OCI-LY7 (cell line): ENCODE measurements at regions of chr20 and their contacts with region 1.

Region 1: DNA sequence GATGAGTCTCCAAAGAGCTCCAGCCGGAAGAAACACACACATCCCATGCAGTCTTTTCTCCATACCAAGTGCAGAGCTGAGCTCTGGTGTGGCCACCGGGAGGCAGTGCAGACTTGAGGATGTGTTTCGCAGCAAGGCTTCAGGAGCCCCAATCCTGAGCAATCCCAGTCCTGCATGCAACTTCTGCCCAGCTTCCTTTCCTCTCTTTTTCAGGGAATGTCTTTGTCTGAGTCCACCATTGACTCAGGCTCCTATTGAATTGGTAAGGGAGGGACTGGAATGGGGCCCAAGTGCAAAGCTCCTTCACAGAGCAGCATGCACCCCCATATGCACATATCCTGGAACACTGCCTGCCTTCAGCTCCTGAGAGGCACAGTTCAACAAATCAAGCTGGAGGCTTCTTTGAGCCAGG is 50.5 kb upstream of the ASIP start:
- DNase-seq: peak; percentile 76
- H3K4me3 ChIP-seq: no peak overlapping the region
- H3K27ac ChIP-seq: no peak overlapping the region
- H3K4me1 ChIP-seq: peaks cover 6% of the 10 kb centered on the region
- CTCF ChIP-seq: peak; percentile 98

Region 2: DNA sequence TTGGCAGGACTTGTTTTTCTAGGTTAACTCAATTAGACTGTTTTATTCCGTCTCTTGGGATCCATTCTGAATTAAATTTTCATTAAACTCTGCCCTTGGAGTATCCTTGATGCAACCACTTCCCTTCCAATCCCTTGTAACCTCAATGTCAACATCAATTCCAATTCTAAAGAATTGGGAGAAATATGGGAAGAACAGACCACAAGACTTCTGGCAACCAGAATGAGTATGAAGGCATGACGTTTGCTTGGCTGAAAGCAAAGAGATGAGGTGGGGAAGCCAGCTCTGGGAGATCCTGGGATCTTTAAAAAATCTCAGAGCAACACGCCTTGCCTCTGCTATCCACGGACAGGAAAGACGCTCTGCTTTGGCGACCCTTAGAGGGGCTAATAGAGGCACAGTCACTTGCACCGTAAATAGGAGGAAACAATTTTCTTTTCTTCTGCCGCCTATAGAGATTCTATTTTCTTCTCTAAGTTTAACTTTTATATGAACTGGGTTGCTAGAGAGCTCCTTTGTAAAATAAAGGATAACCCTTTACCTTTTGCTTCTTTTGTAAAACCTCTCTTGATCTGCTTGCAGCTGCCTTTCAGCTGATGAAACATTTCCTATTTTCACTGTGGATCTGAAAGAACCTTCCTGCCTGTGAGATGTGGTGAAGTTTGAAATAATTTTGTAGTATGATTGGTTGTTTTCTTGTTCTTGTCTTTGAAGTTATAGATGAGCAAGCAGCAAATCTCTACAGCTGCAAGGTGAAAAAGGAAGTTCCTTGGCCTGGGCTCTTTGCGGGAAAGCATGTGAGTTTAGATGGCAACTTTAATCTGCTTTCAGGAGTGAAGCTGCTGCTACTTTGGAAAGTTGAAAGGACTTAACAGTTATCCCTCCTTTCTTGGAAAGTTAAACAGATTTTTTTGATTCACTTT is 50.3 kb after region 1 on chr20 and contains the start of gene ASIP:
- CTCF ChIA-PET with region 1: no interaction called
- POLR2A ChIA-PET with region 1: no interaction called
- intact Hi-C with region 1: loop called (anchors 5 kb)
- DNase-seq: peak; percentile 86
- H3K4me3 ChIP-seq: peak within 1 kb of the TSS; percentile 56
- H3K27ac ChIP-seq: peak within 1 kb of the TSS; percentile 90
- H3K4me1 ChIP-seq: peaks cover 38% of the 10 kb centered on the region
- CTCF ChIP-seq: no peak
- total RNA-seq, gene ASIP: 0.32 TPM in 1 of 2 replicates, not detected in the other

Region 3: DNA sequence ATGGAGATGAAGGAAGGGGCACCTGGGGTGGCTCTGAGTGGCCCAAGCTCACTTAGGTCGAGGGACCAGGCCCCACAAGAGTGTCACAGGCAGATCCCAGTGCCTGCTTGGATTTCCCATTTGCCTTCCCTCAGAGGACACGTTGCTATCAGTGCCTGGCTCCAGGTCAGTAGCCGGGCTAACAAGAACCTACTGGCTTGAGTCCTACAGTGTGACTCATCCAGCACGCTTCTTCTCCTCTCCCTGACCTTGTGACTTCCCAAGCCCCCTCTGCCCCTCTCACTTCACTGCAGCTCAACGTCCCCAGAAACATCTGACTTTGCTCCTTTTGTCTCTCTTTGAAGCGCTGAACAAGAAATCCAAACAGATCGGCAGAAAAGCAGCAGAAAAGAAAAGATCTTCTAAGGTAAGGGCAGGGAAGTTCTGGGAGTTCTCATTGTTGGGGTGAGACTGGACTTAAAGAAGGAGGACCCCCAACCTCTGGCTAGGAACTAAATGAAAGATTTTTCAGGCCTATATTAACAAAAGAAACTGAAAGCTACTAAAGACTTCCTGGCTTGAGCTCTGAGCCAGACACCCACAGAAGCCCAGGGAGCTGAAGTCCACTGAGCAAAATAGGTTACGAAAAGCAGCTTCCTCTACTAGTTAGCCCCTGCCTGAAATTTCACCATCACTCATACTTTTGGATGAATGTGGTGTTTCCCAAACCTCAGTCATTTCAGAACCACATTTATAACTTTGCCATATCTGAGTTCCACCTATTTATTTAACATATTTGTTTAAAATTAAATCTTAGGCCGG is 72.0 kb after region 1 on chr20:
- CTCF ChIA-PET with region 1: no interaction called
- POLR2A ChIA-PET with region 1: interaction called, 3 read pairs
- intact Hi-C with region 1: loop called (anchors 5 kb)
- DNase-seq: no peak
- H3K4me3 ChIP-seq: no peak overlapping the region
- H3K27ac ChIP-seq: no peak overlapping the region
- H3K4me1 ChIP-seq: no peaks in the 10 kb centered on the region
- CTCF ChIP-seq: no peak

Region 4: GRCh38 chr20:34522969-34523871 is 332.5 kb after region 1 on chr20:
- CTCF ChIA-PET with region 1: no interaction called
- POLR2A ChIA-PET with region 1: no interaction called
- intact Hi-C with region 1: loop called (anchors 5 kb)
- DNase-seq: peak; percentile 79
- H3K4me3 ChIP-seq: no peak overlapping the region
- H3K27ac ChIP-seq: no peak overlapping the region
- H3K4me1 ChIP-seq: peaks cover 16% of the 10 kb centered on the region
- CTCF ChIP-seq: peak; percentile 85

Region 5: DNA sequence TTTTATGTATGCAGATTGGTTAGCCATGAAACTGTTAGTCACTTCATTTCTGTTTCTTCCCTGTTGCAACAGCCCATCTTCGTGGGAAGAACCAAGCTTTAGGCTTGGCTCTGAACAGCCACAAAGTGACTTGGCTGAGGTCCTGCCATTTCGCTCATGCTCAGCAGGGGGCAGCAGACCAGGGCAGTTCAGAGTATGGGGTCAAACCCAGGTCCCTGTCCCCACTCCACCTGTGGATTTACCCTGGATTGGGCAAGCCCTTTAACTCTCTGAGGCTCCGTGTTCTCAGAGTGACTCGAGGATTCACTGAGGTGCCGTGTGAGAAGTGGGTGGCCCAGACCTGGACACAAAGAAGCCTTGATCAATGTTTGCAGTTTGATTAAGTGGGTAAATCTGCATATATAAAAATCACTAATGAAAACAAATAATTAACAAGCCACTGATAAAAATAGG is 348.0 kb after region 1 on chr20:
- CTCF ChIA-PET with region 1: no interaction called
- POLR2A ChIA-PET with region 1: no interaction called
- intact Hi-C with region 1: loop called (anchors 5 kb)
- DNase-seq: peak; percentile 64
- H3K4me3 ChIP-seq: no peak overlapping the region
- H3K27ac ChIP-seq: no peak overlapping the region
- H3K4me1 ChIP-seq: no peaks in the 10 kb centered on the region
- CTCF ChIP-seq: peak; percentile 94